Endothelial cell of umbilical vein (primary cell): ENCODE measurements at regions of chr1 and their contacts with region 1.

Region 1: DNA sequence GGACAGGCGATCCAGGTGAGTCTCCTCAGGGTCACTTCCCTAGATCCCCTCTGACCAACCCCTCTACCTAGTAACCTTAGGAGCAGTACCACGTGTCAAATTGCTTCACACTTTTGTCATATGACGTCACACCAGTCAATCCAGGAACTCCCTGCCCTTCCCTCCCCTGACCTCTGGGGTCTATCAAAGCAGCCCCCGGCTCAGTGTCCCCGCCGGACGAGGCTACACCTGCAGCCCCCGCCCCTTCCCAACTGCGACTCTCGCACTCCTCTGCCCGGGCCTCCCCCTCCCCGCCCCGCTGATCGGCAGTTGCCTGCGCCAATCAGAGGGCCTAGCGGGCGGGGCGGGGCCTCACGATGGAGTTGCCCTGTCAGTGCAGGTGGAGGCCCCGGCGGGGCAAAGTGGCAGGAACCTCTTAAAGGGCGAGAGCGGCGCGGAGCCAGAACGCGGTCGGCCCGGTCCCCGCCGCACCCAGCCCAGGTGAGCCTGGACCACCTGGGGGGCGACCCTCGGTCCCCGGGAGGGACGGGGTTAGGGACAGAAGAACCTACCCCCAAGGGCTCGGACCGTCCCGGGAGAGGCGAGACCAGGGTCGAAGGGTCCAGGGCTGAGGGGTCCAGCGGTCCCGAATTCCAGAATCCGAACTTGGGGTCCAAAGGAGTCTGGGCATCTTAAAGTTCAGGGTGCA is 27.5 kb upstream of the EPB41 start:
- DNase-seq: peak; percentile 80
- H3K4me3 ChIP-seq: peak overlapping the region; percentile 68 to 92 (median 84)
- H3K27ac ChIP-seq: peak overlapping the region; percentile 57
- H3K4me1 ChIP-seq: peaks cover 28% of the 10 kb centered on the region
- H3K27me3 ChIP-seq: no peaks in the 10 kb centered on the region
- CTCF ChIP-seq: no peak
- POLR2A ChIP-seq: no peak

Region 2: GRCh38 chr1:28392027-28392652 is 494.7 kb before region 1 on chr1:
- CTCF ChIA-PET with region 1: no interaction called
- POLR2A ChIA-PET with region 1: no interaction called
- dilution Hi-C with region 1: no loop called
- intact Hi-C with region 1: no loop called
- DNase-seq: no peak
- H3K4me3 ChIP-seq: no peak overlapping the region
- H3K27ac ChIP-seq: no peak overlapping the region
- H3K4me1 ChIP-seq: peaks cover 4% of the 10 kb centered on the region
- H3K27me3 ChIP-seq: no peaks in the 10 kb centered on the region
- CTCF ChIP-seq: no peak
- POLR2A ChIP-seq: no peak

Region 3: DNA sequence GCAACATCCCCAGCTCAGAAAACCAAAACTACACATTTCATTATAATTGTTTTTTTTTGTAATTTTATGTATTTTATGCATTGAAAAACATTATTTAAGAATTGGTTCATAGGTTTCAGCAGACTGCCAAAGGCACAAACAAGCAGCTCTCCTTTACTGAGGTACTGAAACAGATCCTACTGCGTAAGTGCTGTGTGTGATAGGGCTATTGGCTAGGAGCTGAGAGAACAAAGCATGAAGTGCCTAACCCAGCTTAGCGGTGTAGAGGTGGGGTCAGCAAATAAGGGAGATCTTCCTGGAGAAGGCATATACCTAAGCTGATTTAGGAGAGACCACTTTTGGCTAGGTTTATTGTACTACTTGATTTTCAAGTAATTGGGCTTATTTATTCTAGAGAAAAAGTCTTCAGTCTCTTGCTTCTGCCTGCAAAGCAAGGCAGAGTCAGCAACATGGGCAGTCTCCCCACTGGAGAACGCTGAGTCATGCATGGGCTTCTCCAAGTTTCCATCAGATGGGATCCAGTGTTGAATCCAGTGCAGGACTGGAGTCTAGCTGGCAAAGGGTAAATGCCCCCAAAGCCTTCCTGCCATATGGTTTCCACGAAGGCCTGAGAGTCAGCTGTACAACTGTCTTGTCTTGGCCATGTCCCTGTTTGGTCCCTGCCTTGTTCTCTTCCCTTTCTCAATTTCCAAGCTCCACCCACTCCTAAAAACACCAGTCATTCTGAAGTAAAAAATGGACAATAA is 168.1 kb before region 1 on chr1:
- CTCF ChIA-PET with region 1: no interaction called
- POLR2A ChIA-PET with region 1: no interaction called
- dilution Hi-C with region 1: no loop called
- intact Hi-C with region 1: no loop called
- DNase-seq: peak; percentile 10
- H3K4me3 ChIP-seq: no peak overlapping the region
- H3K27ac ChIP-seq: no peak overlapping the region
- H3K4me1 ChIP-seq: no peaks in the 10 kb centered on the region
- H3K27me3 ChIP-seq: no peaks in the 10 kb centered on the region
- CTCF ChIP-seq: no peak
- POLR2A ChIP-seq: no peak

Region 4: DNA sequence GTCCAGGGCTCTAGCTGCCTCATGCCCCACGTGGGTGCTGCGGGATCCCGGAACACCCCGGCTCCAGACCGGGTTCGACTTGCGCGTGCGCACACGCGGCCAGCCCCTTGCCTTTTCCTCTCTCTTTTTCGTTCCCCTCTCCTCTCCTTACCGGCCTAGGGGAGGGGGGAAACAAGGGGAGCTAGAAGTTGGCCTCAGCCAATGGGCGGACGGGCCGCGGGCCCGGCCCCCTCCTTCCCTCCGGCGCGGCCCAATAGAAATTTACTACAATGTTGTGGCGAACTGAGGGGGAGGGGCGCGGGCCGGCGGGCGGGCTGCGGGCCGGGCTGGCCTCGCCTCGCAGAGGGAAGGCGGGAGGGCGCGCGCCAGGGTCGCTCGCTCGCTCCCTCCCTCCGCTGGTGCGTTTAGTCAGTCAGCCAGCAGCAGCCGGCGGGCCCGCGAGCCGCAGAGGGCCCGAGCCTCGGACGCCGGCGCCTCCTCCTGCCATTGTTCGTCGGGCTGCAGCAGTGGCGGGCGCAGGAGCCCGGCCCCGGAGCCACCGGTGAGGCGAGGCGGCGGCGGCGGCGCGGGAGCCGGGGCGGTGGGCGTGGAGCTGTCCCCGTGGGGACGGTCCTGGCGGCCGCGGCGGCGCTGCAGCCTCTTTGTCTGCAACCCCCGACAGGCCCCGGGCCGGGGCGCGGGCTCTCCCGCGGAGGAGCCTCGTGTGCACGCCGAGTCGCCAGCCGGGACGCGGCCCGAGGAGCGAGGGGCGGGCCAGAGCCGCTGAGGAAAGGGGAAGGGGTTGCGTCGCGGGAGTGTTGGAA is 27.6 kb after region 1 on chr1 and contains the start of gene EPB41:
- CTCF ChIA-PET with region 1: interaction called, 9 read pairs
- POLR2A ChIA-PET with region 1: interaction called, 3 read pairs
- dilution Hi-C with region 1: no loop called
- intact Hi-C with region 1: loop called (anchors 1 kb)
- DNase-seq: peak; percentile 95
- H3K4me3 ChIP-seq: peak within 1 kb of the TSS; percentile 39 to 54 (median 52)
- H3K27ac ChIP-seq: peak within 1 kb of the TSS; percentile 9
- H3K4me1 ChIP-seq: peaks cover 10% of the 10 kb centered on the region
- H3K27me3 ChIP-seq: no peaks in the 10 kb centered on the region
- CTCF ChIP-seq: no peak
- POLR2A ChIP-seq: no peak
- total RNA-seq, gene EPB41: 39.7 and 45.7 TPM in 2 replicates

Region 5: GRCh38 chr1:29033829-29034466 is 147.1 kb after region 1 on chr1:
- CTCF ChIA-PET with region 1: interaction called, 389 read pairs
- POLR2A ChIA-PET with region 1: interaction called, 3 read pairs
- dilution Hi-C with region 1: no loop called
- intact Hi-C with region 1: loop called (anchors 1 kb)
- DNase-seq: peak; percentile 75
- H3K4me3 ChIP-seq: no peak overlapping the region
- H3K27ac ChIP-seq: no peak overlapping the region
- H3K4me1 ChIP-seq: peaks cover 4% of the 10 kb centered on the region
- H3K27me3 ChIP-seq: no peaks in the 10 kb centered on the region
- CTCF ChIP-seq: peak; percentile 28 to 31
- POLR2A ChIP-seq: no peak

Region 6: GRCh38 chr1:29181413-29182225 is 294.7 kb after region 1 on chr1 and contains the start of gene SRSF4:
- CTCF ChIA-PET with region 1: interaction called, 20 read pairs
- POLR2A ChIA-PET with region 1: interaction called, 14 read pairs
- dilution Hi-C with region 1: no loop called
- intact Hi-C with region 1: loop called (anchors 1 kb)
- DNase-seq: peak; percentile 99
- H3K4me3 ChIP-seq: peak within 1 kb of the TSS; percentile 81 to 99 (median 90)
- H3K27ac ChIP-seq: peak within 1 kb of the TSS; percentile 99
- H3K4me1 ChIP-seq: peaks cover 19% of the 10 kb centered on the region
- H3K27me3 ChIP-seq: no peaks in the 10 kb centered on the region
- CTCF ChIP-seq: peak; percentile 68 to 84
- POLR2A ChIP-seq: peak; percentile 87
- total RNA-seq, gene SRSF4: 92.9 and 108 TPM in 2 replicates

Region 7: DNA sequence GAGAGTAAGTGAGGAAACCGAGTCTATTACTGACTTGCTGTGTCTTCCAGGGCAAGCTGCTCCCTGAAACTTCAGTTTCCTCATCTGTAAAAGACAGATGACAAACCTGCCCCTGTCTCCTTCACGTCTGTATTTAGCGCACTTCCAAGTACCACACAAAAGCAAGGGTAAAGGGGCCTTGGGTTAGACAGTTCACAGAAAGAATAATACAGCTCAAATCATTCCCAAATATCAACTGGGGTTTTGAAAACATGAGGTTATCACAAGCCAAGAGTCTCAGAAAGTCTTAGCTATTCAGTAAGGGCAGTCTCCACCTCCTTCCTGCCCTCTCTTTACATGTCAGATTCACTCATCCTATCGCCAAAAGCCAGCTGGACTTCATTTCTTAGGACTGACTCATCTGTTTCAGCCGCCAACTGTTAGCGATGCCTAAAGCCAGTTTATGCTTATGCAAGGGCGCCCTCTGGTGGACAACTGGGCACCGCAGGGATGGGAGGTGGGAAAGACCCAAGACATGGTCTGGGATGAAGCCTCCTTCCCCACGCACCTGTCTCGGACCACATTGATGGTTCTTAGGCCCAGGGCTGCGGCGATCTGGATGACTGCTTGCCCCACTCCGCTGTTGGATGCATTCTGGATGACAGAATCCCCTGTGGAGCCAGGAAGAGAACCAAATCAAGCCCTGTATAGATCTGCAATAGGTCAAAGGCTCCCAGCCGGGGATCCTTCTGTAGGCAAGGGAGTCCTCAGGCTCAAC is 315.9 kb after region 1 on chr1:
- CTCF ChIA-PET with region 1: interaction called, 133 read pairs
- POLR2A ChIA-PET with region 1: interaction called, 4 read pairs
- dilution Hi-C with region 1: no loop called
- intact Hi-C with region 1: loop called (anchors 1 kb)
- DNase-seq: peak; percentile 96
- H3K4me3 ChIP-seq: no peak overlapping the region
- H3K27ac ChIP-seq: peak overlapping the region; percentile 63
- H3K4me1 ChIP-seq: peaks cover 10% of the 10 kb centered on the region
- H3K27me3 ChIP-seq: no peaks in the 10 kb centered on the region
- CTCF ChIP-seq: peak; percentile 89 to 97
- POLR2A ChIP-seq: no peak